ENCODE measurements at regions of chr17 and their contacts with region 1.

Region 1: DNA sequence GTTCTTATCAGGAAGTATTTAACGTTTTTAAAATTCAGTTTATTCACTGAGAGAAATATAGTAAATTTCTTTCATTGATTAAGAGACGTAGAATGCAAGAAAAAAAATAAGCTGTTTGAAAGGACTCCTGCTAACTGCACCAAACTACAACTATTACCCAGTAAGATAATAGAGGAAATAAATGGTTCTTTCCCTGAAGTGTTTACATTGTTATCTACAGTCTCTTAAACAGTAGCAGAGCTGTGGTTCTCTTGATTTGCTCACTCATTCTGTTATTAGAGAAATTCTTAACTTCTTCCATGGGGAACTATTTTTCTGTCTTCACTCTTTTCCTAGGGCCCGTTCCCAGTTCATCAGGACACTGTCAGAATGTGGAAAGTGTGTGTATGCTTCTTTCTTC is 973.0 kb downstream of the KCNJ2 start:
- DNase-seq: no peak
- ATAC-seq: no peak
- H3K4me3 ChIP-seq: no peak overlapping the region
- H3K27ac ChIP-seq: no peak overlapping the region
- H3K4me1 ChIP-seq: peaks cover 0 to 4% of the 10 kb centered on the region in 2 donors
- H3K27me3 ChIP-seq: no peaks in the 10 kb centered on the region
- CTCF ChIP-seq: no peak
- POLR2A ChIP-seq: no peak

Region 2: DNA sequence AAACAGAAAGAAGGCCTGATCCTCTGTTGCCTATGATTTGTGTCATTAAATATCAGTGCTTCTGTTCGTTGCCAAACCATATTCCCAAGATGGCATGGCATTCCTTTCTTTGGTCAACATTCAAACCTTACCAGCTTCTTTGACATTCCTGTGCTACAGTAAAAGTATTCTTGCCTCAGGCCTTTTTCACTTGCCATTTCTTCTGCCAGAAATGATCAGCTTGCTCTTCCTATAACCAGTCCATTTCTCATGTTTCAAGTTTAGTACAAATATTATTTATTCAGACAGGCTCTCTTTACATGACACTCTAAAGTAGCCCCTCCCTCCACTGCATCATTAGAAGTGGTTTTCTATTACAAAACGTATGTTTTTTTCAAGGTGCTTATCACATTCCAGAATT is 694.7 kb before region 1 on chr17:
- in situ Hi-C with region 1: no loop called
- intact Hi-C with region 1: no loop called
- DNase-seq: no peak
- ATAC-seq: no peak
- H3K4me3 ChIP-seq: no peak overlapping the region
- H3K27ac ChIP-seq: no peak overlapping the region
- H3K4me1 ChIP-seq: no peaks in the 10 kb centered on the region
- H3K27me3 ChIP-seq: no peaks in the 10 kb centered on the region
- CTCF ChIP-seq: no peak
- POLR2A ChIP-seq: no peak

Region 3: GRCh38 chr17:71032746-71033273 is 109.5 kb before region 1 on chr17:
- in situ Hi-C with region 1: loop called in 1 of 4 experiments (anchors 25 kb)
- intact Hi-C with region 1: no loop called
- DNase-seq: no peak
- ATAC-seq: no peak
- H3K4me3 ChIP-seq: no peak overlapping the region
- H3K27ac ChIP-seq: no peak overlapping the region
- H3K4me1 ChIP-seq: no peaks in the 10 kb centered on the region
- H3K27me3 ChIP-seq: no peaks in the 10 kb centered on the region
- CTCF ChIP-seq: no peak
- POLR2A ChIP-seq: no peak